Adrenal gland (tissue), 19 donors: ENCODE measurements at regions of chr19 and their contacts with region 1.

Region 1: DNA sequence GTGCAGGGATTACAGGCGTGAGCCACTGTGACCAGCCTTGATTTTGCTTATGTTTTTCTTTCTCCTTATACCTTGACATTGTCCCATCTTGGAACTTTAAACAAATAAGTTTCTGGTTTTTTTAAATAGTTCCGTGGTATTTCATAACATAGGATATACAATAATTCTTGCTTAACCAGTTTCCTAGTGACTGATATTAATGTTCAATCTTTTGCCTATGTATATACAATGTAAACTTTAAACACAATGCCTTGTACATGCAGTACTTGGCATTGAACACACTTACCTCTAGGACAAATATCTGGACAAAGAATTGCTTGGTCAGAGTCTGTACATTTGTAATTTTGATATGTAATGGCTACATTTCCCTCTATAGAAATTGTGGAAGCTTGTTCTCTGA is 24.4 kb upstream of the SPACA4 start:
- DNase-seq: no peak
- H3K4me3 ChIP-seq: no peak overlapping the region
- H3K27ac ChIP-seq: no peak overlapping the region
- H3K4me1 ChIP-seq: peaks cover 0 to 4% of the 10 kb centered on the region in 2 donors
- H3K27me3 ChIP-seq: no peaks in the 10 kb centered on the region
- CTCF ChIP-seq: no peak
- POLR2A ChIP-seq: no peak

Region 2: GRCh38 chr19:48506138-48506733 is 75.9 kb before region 1 on chr19:
- intact Hi-C with region 1: loop called (anchors 5 kb)
- DNase-seq: peak in 3 of 7 donors; percentile 15 to 33 (median 31)
- H3K4me3 ChIP-seq: no peak overlapping the region
- H3K27ac ChIP-seq: no peak overlapping the region
- H3K4me1 ChIP-seq: peaks cover 2% of the 10 kb centered on the region in 2 donors
- H3K27me3 ChIP-seq: peaks cover 4% of the 10 kb centered on the region
- CTCF ChIP-seq: peak; percentile 46 to 87 (median 70)
- POLR2A ChIP-seq: no peak